ENCODE measurements at regions of chr2 and their contacts with region 1.

Region 1: GRCh38 chr2:205461678-205462665 is 220.3 kb upstream of the NRP2 start:
- DNase-seq: peak; percentile 19
- ATAC-seq: peak; percentile 78
- H3K4me3 Mint-ChIP-seq: no peak overlapping the region
- H3K27ac Mint-ChIP-seq: no peak overlapping the region
- H3K4me1 Mint-ChIP-seq: peaks cover 6% of the 10 kb centered on the region
- H3K27me3 Mint-ChIP-seq: peaks cover 7% of the 10 kb centered on the region

Region 2: DNA sequence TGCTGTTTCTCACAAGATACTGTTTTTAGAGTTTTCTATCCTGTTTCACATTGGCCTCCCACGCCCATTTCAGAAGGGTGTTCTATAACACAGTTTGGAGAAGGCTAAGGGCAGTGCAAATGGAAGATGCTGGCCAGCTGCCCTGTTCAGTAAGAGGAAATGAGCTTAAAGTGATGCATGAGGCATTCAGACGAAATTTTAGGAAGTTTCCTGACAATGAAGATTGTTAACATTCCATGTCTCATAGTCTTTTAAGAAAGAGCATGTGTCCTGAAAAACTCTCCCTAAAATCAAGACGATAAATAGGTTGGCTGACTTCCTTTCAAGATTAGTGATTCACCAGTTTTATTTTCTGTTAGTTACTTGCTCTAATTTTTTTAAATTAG is 263.8 kb before region 1 on chr2:
- CTCF ChIA-PET with region 1: no interaction called
- POLR2A ChIA-PET with region 1: no interaction called
- intact Hi-C with region 1: no loop called
- DNase-seq: no peak
- ATAC-seq: no peak
- H3K4me3 Mint-ChIP-seq: no peak overlapping the region
- H3K27ac Mint-ChIP-seq: no peak overlapping the region
- H3K4me1 Mint-ChIP-seq: peaks cover 6% of the 10 kb centered on the region
- H3K27me3 Mint-ChIP-seq: no peaks in the 10 kb centered on the region

Region 3: GRCh38 chr2:205372141-205372540 is 89.8 kb before region 1 on chr2:
- CTCF ChIA-PET with region 1: no interaction called
- POLR2A ChIA-PET with region 1: no interaction called
- intact Hi-C with region 1: loop called in 1 of 2 experiments (anchors 5 kb)
- DNase-seq: no peak
- ATAC-seq: peak; percentile 53
- H3K4me3 Mint-ChIP-seq: no peak overlapping the region
- H3K27ac Mint-ChIP-seq: no peak overlapping the region
- H3K4me1 Mint-ChIP-seq: peaks cover 13% of the 10 kb centered on the region
- H3K27me3 Mint-ChIP-seq: peaks cover 3% of the 10 kb centered on the region

Measured in activated CD4-positive, alpha-beta T cell treated with anti-CD3 and anti-CD28 coated beads for 36 hours (primary cell).